Activated T-helper 1 cell treated with anti-CD3 and anti-CD28 coated beads, Interleukin-12 subunit alpha, Interleukin-12 subunit beta, Interleukin-2, Interleukin-4 antibody, amounts not matched to agents 30 ng/mL and 10 ng/mL and 1 ng/mL, durations not matched to agents 14 hours and 24 hours and 36 hours (primary cell): ENCODE measurements at regions of chr3 and their contacts with region 1.

Region 1: DNA sequence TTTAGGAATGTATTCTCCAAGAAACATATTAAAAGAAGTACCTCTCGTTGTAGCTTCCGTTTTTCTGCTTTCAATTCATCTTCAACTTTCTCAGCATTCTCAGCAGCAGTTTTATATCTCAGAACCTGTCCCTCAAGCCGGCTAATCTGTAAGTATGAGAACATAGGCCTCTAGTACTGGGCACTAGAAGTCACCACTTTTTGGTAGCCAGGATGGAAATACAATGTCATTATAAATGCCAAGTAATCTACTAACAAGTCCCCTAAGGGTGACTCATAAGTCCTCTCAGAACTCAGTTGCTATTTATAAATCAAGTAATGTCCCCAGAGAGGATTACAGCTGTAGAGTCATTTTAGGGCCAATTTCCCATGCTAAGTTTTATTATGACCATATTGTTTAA is 61.1 kb downstream of the MLH1 start:
- DNase-seq: no peak
- H3K4me3 Mint-ChIP-seq: no peak overlapping the region
- H3K27ac Mint-ChIP-seq: peak overlapping the region; percentile 81
- H3K4me1 Mint-ChIP-seq: peaks cover 10% of the 10 kb centered on the region
- H3K27me3 Mint-ChIP-seq: no peaks in the 10 kb centered on the region

Region 2: DNA sequence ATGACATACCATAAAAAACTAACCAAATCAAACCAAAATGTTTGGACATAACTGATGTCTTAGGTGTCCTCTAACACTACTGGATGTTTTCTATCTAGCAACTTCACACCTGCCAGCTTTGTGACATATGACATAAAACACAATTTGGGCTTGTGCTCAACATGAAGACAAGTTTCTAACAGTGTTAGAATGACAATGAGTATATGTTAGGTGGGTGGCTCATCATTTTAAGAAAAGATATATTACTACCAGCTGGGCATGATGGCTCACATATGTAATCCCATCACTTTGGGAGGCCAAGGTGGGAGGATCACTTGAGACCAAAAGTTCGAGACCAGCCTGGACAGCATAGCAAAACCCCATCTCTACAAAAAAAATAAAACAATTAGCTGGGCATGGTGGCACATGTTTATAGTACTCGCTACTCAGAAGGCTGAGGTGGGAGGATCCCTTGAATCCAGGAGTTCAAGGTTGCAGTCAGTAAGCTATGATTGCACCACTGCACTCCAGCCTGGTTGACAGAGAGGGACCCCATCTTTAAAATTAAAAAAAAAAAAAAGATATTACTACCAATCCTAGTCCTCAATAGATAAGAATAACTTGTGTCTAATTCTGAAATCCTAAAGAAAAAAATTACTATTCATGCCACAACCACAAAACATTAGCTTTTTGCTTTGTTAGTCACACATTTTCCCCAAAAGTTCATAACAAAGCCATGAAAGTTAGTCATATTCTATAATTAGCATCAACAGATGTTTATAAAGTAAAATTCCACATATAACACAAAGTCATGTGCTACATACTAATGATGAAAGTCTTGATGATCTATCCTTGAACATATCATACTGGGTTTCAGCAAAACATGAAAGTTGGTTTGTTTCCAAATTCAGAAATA is 60.1 kb after region 1 on chr3:
- intact Hi-C with region 1: loop called (anchors 2 kb)
- DNase-seq: no peak
- H3K4me3 Mint-ChIP-seq: no peak overlapping the region
- H3K27ac Mint-ChIP-seq: no peak overlapping the region
- H3K4me1 Mint-ChIP-seq: peaks cover 8% of the 10 kb centered on the region
- H3K27me3 Mint-ChIP-seq: no peaks in the 10 kb centered on the region

Region 3: DNA sequence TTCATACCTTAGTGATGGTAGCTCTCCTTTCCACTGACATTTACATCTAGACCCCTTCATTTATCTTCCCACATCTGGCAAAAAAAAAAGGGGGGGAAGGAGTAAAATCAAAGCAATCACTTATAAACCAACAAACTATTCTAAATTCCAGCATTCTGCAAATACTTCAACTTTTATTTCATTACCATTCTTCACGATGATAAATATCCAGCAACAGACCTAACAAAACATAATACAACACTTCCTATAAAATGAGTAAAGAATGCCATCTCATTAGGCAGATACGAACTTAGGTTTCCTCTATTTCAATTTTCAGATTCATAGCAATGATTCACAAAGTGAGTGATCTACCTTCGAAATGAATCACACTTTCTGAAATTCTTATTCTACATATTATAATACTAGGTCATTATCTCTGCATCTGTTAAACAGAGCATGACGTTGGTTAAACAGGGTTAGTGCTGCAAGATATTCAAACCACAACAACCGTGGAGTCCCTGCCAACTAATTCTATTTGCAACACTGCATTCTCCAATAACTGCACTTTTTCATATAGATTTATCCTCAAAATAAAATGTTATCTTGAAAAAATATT is 120.3 kb after region 1 on chr3 and contains the start of gene LRRFIP2:
- intact Hi-C with region 1: loop called (anchors 1 kb)
- DNase-seq: no peak
- H3K4me3 Mint-ChIP-seq: peak within 1 kb of the TSS; percentile 91
- H3K27ac Mint-ChIP-seq: peak within 1 kb of the TSS; percentile 57
- H3K4me1 Mint-ChIP-seq: peaks cover 56% of the 10 kb centered on the region
- H3K27me3 Mint-ChIP-seq: no peaks in the 10 kb centered on the region
- total RNA-seq, gene LRRFIP2: 26.2 and 28.6 TPM in 2 replicates